ENCODE measurements at regions of chr10 and their contacts with region 1.

Region 1: GRCh38 chr10:119165171-119166110 is at the start of gene SFXN4:
- DNase-seq: peak; percentile 66 to 81
- ATAC-seq: peak; percentile 89 to 90
- H3K4me3 ChIP-seq: peak within 1 kb of the TSS; percentile 69 to 86 (median 78)
- H3K27ac ChIP-seq: peak within 1 kb of the TSS; percentile 90 to 97 (median 95)
- H3K4me1 ChIP-seq: peaks cover 21 to 29% of the 10 kb centered on the region in 2 donors
- H3K27me3 ChIP-seq: no peaks in the 10 kb centered on the region
- CTCF ChIP-seq: peak in 2 of 5 experiments; percentile 5 to 25
- POLR2A ChIP-seq: peak; percentile 78 to 83
- total RNA-seq, gene SFXN4: 25.6 to 69.7 (median 39.8) TPM

Region 2: DNA sequence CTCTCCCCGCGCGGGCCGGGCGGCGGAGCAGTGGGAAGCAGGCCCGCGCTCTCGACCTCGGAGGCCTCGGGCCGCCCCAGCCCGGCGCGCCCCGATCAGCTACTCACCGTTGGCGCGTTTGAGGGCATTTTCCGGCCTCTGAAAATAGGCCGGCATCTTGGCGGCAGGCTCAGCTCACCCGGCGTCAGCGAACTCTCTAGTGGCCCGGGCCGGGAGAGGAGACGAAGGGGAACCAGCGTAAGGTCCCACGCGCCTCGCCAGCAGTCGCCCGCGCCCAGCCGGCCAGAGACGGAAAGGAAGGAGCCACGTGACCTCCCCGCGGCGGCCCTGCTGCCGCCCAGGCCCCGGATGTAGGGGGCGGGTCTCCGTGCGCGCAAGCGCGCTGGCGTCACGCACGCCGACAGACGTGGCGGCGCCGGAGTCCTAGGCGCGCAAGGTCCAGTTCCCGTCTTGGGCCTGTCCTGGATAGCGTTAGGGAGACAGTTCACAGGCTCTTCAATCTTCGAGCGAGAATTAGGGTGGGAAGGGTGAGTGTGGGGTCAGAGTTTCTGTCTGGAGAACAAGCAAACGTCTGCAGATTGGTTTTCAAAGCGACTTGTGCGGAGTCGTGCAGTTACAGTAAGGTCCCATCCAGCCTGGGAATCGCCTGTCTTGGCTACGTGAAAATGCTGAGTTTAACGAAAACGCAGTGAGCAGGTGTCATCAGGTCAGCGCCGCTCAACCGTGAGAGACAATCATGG is 84.8 kb before region 1 on chr10 and contains the start of gene EIF3A:
- in situ Hi-C with region 1: no loop called
- intact Hi-C with region 1: loop called (anchors 1 kb)
- DNase-seq: peak; percentile 81 to 92
- ATAC-seq: peak; percentile 87 to 90
- H3K4me3 ChIP-seq: peak within 1 kb of the TSS; percentile 77 to 94 (median 92)
- H3K27ac ChIP-seq: peak within 1 kb of the TSS; percentile 95 to 99 (median 97)
- H3K4me1 ChIP-seq: peaks cover 30 to 32% of the 10 kb centered on the region in 2 donors
- H3K27me3 ChIP-seq: no peaks in the 10 kb centered on the region
- CTCF ChIP-seq: peak in 1 of 5 experiments; percentile 9
- POLR2A ChIP-seq: peak; percentile 96 to 97
- total RNA-seq, gene EIF3A: 136 to 240 (median 191) TPM

Region 3: DNA sequence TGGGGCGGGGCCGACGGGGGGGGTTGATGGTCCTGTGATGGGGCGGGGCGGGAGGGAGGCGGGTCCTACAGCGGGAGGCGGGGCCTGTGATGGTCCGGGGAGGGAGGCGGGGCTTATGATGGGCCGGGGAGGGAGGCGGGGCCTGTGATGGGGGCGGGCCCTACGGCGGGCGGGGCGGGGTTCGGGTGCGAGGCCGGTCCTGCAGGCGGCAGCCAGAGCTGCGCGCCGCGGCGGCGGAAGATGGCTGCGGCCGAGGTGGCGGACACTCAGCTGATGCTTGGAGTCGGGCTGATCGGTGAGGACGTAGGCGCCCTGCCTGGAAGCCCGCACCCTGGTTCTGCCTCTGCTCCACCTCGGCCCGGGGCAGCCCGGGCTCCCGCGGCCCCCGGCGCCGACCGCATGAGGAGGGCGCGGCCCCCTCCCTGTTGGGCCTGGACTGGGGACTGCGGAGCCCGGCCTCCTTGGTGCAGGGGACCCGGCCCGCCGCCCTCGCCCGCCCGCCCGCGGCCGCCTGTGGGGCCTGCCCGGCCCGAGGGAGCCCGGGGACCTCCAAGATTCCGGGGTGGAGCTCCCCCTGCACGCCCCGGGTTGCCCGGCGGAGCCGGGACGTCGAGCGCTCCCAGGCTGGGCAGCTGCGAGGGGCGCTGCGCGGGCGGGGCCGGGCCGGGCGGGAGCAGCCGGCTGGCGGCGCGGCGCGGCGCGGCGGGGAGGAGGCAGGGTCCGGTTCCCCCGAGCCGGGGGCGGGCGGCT is 61.4 kb before region 1 on chr10 and contains the start of gene DENND10:
- in situ Hi-C with region 1: no loop called
- intact Hi-C with region 1: loop called (anchors 2 kb)
- DNase-seq: peak; percentile 72 to 73
- ATAC-seq: peak; percentile 86 to 90
- H3K4me3 ChIP-seq: peak within 1 kb of the TSS; percentile 60 to 89 (median 79)
- H3K27ac ChIP-seq: peak within 1 kb of the TSS; percentile 72 to 86 (median 84)
- H3K4me1 ChIP-seq: peaks cover 8% of the 10 kb centered on the region in 2 donors
- H3K27me3 ChIP-seq: no peaks in the 10 kb centered on the region
- CTCF ChIP-seq: peak in 1 of 5 experiments; percentile 20
- POLR2A ChIP-seq: peak; percentile 87
- total RNA-seq, gene DENND10: 25.7 to 59.5 (median 43.7) TPM

Region 4: GRCh38 chr10:119178372-119179119 is 13.1 kb after region 1 on chr10 and contains the start of gene PRDX3:
- in situ Hi-C with region 1: no loop called
- intact Hi-C with region 1: loop called (anchors 1 kb)
- DNase-seq: peak; percentile 83 to 90
- ATAC-seq: peak; percentile 96 to 97
- H3K4me3 ChIP-seq: peak within 1 kb of the TSS; percentile 74 to 91 (median 87)
- H3K27ac ChIP-seq: peak within 1 kb of the TSS; percentile 90 to 97 (median 94)
- H3K4me1 ChIP-seq: peaks cover 18 to 24% of the 10 kb centered on the region in 2 donors
- H3K27me3 ChIP-seq: no peaks in the 10 kb centered on the region
- CTCF ChIP-seq: peak in 3 of 5 experiments; percentile 36 to 56 (median 50)
- POLR2A ChIP-seq: peak; percentile 65 to 79
- total RNA-seq, gene PRDX3: 227 to 342 (median 250) TPM

Region 5: GRCh38 chr10:119872860-119873681 is 707.6 kb after region 1 on chr10:
- in situ Hi-C with region 1: loop called in 1 of 4 experiments (anchors 25 kb)
- intact Hi-C with region 1: no loop called
- DNase-seq: peak; percentile 71 to 81
- ATAC-seq: peak; percentile 92 to 93
- H3K4me3 ChIP-seq: peak overlapping the region; percentile 85 to 96 (median 90)
- H3K27ac ChIP-seq: peak overlapping the region; percentile 89 to 97 (median 92)
- H3K4me1 ChIP-seq: peaks cover 17 to 28% of the 10 kb centered on the region in 2 donors
- H3K27me3 ChIP-seq: no peaks in the 10 kb centered on the region
- CTCF ChIP-seq: peak in 1 of 5 experiments; percentile 2
- POLR2A ChIP-seq: peak in 1 of 2 donors; percentile 42